Dendritic cell treated with granulocyte-macrophage colony-stimulating factor and Interleukin-4, amounts not matched to agents 40 ng/mL and 50 ng/mL, for 4 days (primary cell): ENCODE measurements at regions of chr13 and their contacts with region 1.

Region 1: GRCh38 chr13:99501184-99501847 is at the start of gene TM9SF2:
- H3K4me3 Mint-ChIP-seq: peak within 1 kb of the TSS; percentile 100
- H3K27ac Mint-ChIP-seq: peak within 1 kb of the TSS; percentile 99
- H3K4me1 Mint-ChIP-seq: peaks cover 63% of the 10 kb centered on the region
- H3K27me3 Mint-ChIP-seq: no peaks in the 10 kb centered on the region

Region 2: DNA sequence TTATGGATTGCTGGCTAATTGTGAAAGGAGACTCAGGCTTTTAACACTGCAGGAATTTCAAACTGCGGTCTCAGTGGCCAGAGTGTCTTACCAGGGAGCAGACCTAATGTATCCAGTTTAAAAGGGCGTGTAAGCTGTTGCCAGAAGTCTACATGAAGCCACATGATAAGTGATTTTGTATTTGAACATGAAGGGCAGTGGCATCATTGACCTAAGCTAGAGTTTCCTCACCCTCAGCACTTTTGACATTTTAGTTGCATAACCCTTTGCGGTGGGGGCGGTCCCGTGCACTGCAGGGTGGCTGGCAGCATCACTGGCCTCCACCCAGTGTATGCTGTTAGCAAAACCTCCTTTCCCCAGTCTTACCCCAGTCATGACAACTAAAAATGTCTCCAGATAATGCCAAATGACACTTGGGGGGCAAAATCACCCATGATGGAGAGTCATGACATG is 219.5 kb before region 1 on chr13:
- intact Hi-C with region 1: loop called (anchors 5 kb)
- H3K4me3 Mint-ChIP-seq: peak overlapping the region; percentile 40
- H3K27ac Mint-ChIP-seq: peak overlapping the region; percentile 96
- H3K4me1 Mint-ChIP-seq: peaks cover 81% of the 10 kb centered on the region
- H3K27me3 Mint-ChIP-seq: no peaks in the 10 kb centered on the region

Region 3: DNA sequence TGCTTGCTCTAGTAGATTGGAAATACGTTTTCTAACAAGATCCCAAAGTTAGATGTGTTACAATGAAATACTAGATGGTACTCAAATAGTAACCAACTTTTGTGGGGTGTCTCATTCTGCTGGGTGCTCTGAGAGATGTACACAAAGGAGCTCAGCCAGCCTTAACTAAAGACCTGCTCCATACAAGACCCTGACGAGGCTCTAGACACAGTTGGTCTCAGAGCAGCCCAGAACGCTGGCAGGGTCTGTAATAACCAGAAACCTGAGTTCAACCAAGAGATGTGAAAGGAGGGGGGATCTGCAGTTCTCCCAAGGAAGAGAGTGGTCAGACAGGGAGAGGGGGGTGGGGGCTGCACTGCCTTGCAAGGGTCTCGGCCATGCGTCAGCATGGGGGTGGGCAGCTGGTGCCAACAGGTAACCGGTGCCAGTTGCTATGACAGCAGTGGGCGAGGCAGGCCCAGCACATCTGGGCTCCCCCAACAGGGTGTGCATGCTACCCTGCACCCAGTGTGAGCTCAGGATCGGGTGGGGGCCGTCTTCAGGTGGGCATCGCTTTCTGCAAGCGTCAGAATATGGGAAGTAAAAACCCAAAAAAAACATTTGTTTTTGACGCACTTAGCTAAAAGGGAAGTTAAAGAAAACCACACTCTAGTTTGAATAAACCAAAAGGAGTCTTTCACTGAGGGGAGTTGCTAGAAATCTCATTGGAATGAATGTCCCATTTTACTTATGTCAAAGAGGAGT is 126.2 kb before region 1 on chr13:
- intact Hi-C with region 1: loop called (anchors 5 kb)
- H3K4me3 Mint-ChIP-seq: peak overlapping the region; percentile 23
- H3K27ac Mint-ChIP-seq: peak overlapping the region; percentile 88
- H3K4me1 Mint-ChIP-seq: peaks cover 89% of the 10 kb centered on the region
- H3K27me3 Mint-ChIP-seq: no peaks in the 10 kb centered on the region

Region 4: GRCh38 chr13:99442273-99442895 is 58.9 kb before region 1 on chr13:
- intact Hi-C with region 1: loop called (anchors 1 kb)
- H3K4me3 Mint-ChIP-seq: no peak overlapping the region
- H3K27ac Mint-ChIP-seq: no peak overlapping the region
- H3K4me1 Mint-ChIP-seq: no peaks in the 10 kb centered on the region
- H3K27me3 Mint-ChIP-seq: peaks cover 22% of the 10 kb centered on the region

Region 5: GRCh38 chr13:99542788-99543406 is 41.6 kb after region 1 on chr13:
- intact Hi-C with region 1: loop called (anchors 5 kb)
- H3K4me3 Mint-ChIP-seq: peak overlapping the region; percentile 48
- H3K27ac Mint-ChIP-seq: peak overlapping the region; percentile 89
- H3K4me1 Mint-ChIP-seq: peaks cover 27% of the 10 kb centered on the region
- H3K27me3 Mint-ChIP-seq: no peaks in the 10 kb centered on the region

Region 6: DNA sequence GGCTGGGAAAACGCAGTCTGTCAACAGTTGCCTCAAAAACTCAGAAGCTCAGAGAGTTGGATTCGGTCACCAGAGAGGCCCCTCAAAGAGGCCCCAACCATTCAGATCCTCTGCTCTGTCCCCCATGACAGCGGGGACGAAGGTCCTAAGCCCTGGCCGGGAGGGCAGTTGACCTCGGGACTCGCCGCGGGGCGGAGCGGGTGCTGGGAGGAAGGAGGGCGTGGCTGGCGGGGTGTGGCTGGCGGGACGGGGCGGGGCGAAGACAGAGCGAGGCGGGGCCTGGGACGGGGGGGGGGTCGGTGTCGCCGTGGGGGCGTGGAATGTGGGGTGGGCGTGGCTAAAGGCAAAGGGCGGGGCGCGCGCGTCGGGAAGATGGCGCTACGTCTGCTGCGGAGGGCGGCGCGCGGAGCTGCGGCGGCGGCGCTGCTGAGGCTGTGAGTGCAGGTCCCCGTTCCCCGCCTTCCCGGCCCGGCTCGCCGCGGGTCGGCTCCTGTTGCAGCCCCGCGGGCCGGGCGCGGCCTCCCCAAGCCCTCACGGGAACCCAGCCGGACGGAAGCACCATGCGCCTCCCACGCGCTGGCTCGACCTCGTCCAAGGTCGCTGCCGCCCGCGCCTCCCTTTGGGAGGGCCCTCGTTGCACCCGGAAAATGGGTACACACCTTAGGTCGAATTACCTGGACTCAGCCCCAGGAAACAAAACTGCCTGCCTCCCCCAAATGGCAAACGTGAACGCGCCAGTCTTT is 105.2 kb after region 1 on chr13:
- intact Hi-C with region 1: loop called (anchors 5 kb)
- H3K4me3 Mint-ChIP-seq: peak within 1 kb of the TSS; percentile 81
- H3K27ac Mint-ChIP-seq: peak within 1 kb of the TSS; percentile 90
- H3K4me1 Mint-ChIP-seq: peaks cover 17% of the 10 kb centered on the region
- H3K27me3 Mint-ChIP-seq: peaks cover 21% of the 10 kb centered on the region

Region 7: DNA sequence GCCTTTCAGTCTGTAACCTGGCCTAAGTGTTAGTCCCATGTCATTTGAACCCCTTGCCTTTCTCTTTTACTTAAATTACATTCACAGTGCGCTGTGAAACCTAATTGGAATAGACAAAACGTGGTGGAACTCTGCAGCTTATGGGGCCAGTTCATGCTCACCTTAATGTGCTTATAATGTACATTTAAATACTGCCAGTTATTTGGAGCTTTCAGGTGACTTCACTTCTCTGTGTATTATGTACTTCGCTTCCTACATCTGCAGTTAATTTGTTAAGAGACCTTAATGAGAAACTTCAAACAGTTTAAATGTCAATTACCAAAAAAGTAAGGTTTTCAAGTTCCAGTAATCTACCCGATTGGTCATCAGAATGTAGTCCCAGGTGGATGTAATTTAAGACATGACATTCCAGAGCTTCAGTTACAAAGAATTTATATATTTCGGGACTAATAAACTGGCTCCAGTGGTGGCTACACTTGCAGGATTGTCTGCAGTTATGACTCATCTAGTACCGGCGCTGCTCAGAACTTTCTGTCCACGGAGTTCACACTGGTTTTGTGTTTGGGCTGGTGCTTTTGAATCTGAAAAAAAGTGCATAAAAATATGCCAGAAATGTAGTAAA is 125.3 kb after region 1 on chr13:
- intact Hi-C with region 1: no loop called
- H3K4me3 Mint-ChIP-seq: no peak overlapping the region
- H3K27ac Mint-ChIP-seq: no peak overlapping the region
- H3K4me1 Mint-ChIP-seq: no peaks in the 10 kb centered on the region
- H3K27me3 Mint-ChIP-seq: no peaks in the 10 kb centered on the region

Region 8: GRCh38 chr13:99689955-99690354 is 188.6 kb after region 1 on chr13:
- intact Hi-C with region 1: no loop called
- H3K4me3 Mint-ChIP-seq: no peak overlapping the region
- H3K27ac Mint-ChIP-seq: no peak overlapping the region
- H3K4me1 Mint-ChIP-seq: no peaks in the 10 kb centered on the region
- H3K27me3 Mint-ChIP-seq: peaks cover 1% of the 10 kb centered on the region